GM12878 (cell line): ENCODE measurements at regions of chr10 and their contacts with region 1.

Region 1: GRCh38 chr10:103416436-103417147 is 20.2 kb downstream of the PDCD11 start:
- DNase-seq: peak; percentile 27
- ATAC-seq: peak; percentile 86
- H3K4me3 ChIP-seq: no peak overlapping the region
- H3K27ac ChIP-seq: no peak overlapping the region
- H3K4me1 ChIP-seq: no peaks in the 10 kb centered on the region
- H3K27me3 ChIP-seq: no peaks in the 10 kb centered on the region
- CTCF ChIP-seq: peak; percentile 39 to 80 (median 59); a peak in 5 of 6 replicates
- EP300 ChIP-seq: no peak
- POLR2A ChIP-seq: no peak
- RAD21 ChIP-seq: peak; percentile 79

Region 2: DNA sequence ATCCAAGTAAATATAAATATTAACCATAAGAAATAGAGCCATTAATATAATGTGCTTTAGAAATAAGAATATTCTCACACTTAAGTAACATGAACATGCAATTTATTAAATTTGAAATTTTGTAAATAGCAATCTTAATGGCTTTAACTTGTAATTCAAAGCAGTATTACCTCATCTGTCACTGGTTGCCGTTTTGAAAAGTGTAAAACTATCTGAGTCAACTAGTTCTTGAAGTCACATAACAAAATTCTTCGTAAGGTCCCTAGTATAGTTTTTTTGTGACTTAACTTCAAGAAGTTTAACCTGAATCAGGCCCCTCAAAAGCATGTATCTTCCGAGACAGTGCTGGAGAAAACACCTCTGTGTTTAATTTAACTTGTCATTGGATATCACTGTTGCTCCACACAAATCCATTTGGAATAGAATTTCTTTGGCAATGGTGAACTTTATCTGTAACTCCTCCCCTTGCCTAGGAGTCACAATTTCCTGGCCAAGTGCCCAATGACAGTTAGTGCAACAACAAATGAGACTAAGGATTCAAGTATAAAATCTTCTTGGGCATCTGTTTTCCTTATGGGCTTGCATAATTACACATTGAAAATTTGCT is 270.6 kb before region 1 on chr10:
- CTCF ChIA-PET with region 1: no interaction called
- POLR2A ChIA-PET with region 1: no interaction called
- RAD21 ChIA-PET with region 1: no interaction called
- SMC1A ChIA-PET with region 1: no interaction called
- in situ Hi-C with region 1: no loop called
- intact Hi-C with region 1: no loop called
- DNase-seq: no peak
- ATAC-seq: no peak
- H3K4me3 ChIP-seq: no peak overlapping the region
- H3K27ac ChIP-seq: no peak overlapping the region
- H3K4me1 ChIP-seq: no peaks in the 10 kb centered on the region
- H3K27me3 ChIP-seq: no peaks in the 10 kb centered on the region
- CTCF ChIP-seq: no peak
- EP300 ChIP-seq: no peak
- POLR2A ChIP-seq: no peak
- RAD21 ChIP-seq: no peak

Region 3: DNA sequence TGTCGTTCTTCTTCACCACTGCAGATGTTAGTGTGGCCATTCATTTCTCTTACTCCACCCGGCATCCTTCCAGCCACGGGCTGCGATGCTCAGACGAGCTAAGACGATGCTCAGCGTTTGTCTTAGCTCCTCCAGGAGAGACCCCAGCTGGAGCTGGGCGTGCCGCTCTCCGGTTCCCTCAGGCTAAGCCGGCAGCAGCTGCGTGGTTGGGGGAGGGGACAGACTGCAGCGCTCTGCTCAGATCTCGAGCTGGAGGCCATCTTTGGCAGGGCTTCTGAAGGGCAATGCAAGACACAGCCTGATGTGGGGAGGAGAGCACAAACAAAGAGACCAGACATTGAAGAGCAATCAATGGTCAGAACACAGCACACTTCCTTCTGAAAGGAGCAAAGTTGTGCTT is 134.8 kb before region 1 on chr10:
- CTCF ChIA-PET with region 1: no interaction called
- POLR2A ChIA-PET with region 1: no interaction called
- RAD21 ChIA-PET with region 1: no interaction called
- SMC1A ChIA-PET with region 1: no interaction called
- in situ Hi-C with region 1: no loop called
- intact Hi-C with region 1: no loop called
- DNase-seq: no peak
- ATAC-seq: no peak
- H3K4me3 ChIP-seq: no peak overlapping the region
- H3K27ac ChIP-seq: no peak overlapping the region
- H3K4me1 ChIP-seq: no peaks in the 10 kb centered on the region; the same call in 1 of the 2 replicates
- H3K27me3 ChIP-seq: peaks cover 0 to 6% of the 10 kb centered on the region in 2 experiments
- CTCF ChIP-seq: no peak
- EP300 ChIP-seq: no peak
- POLR2A ChIP-seq: no peak
- RAD21 ChIP-seq: no peak

Region 4: GRCh38 chr10:103427866-103428265 is 11.3 kb after region 1 on chr10:
- CTCF ChIA-PET with region 1: interaction called, 19 read pairs
- POLR2A ChIA-PET with region 1: no interaction called
- RAD21 ChIA-PET with region 1: no interaction called
- SMC1A ChIA-PET with region 1: interaction called, 9 read pairs
- in situ Hi-C with region 1: no loop called
- intact Hi-C with region 1: no loop called
- DNase-seq: no peak
- ATAC-seq: no peak
- H3K4me3 ChIP-seq: no peak overlapping the region
- H3K27ac ChIP-seq: no peak overlapping the region
- H3K4me1 ChIP-seq: no peaks in the 10 kb centered on the region
- H3K27me3 ChIP-seq: no peaks in the 10 kb centered on the region
- CTCF ChIP-seq: no peak
- EP300 ChIP-seq: no peak
- POLR2A ChIP-seq: no peak
- RAD21 ChIP-seq: no peak

Region 5: GRCh38 chr10:103476046-103476995 is 59.7 kb after region 1 on chr10:
- CTCF ChIA-PET with region 1: interaction called, 195 read pairs
- POLR2A ChIA-PET with region 1: interaction called, 6 read pairs
- RAD21 ChIA-PET with region 1: interaction called, 58 read pairs
- SMC1A ChIA-PET with region 1: interaction called, 85 read pairs
- in situ Hi-C with region 1: loop called (anchors 5 kb)
- intact Hi-C with region 1: no loop called
- DNase-seq: no peak
- ATAC-seq: peak; percentile 80
- H3K4me3 ChIP-seq: no peak overlapping the region
- H3K27ac ChIP-seq: no peak overlapping the region
- H3K4me1 ChIP-seq: peaks cover 29% of the 10 kb centered on the region
- H3K27me3 ChIP-seq: no peaks in the 10 kb centered on the region
- CTCF ChIP-seq: peak; percentile 55 to 80 (median 67)
- EP300 ChIP-seq: no peak
- POLR2A ChIP-seq: no peak
- RAD21 ChIP-seq: peak; percentile 66

Region 6: DNA sequence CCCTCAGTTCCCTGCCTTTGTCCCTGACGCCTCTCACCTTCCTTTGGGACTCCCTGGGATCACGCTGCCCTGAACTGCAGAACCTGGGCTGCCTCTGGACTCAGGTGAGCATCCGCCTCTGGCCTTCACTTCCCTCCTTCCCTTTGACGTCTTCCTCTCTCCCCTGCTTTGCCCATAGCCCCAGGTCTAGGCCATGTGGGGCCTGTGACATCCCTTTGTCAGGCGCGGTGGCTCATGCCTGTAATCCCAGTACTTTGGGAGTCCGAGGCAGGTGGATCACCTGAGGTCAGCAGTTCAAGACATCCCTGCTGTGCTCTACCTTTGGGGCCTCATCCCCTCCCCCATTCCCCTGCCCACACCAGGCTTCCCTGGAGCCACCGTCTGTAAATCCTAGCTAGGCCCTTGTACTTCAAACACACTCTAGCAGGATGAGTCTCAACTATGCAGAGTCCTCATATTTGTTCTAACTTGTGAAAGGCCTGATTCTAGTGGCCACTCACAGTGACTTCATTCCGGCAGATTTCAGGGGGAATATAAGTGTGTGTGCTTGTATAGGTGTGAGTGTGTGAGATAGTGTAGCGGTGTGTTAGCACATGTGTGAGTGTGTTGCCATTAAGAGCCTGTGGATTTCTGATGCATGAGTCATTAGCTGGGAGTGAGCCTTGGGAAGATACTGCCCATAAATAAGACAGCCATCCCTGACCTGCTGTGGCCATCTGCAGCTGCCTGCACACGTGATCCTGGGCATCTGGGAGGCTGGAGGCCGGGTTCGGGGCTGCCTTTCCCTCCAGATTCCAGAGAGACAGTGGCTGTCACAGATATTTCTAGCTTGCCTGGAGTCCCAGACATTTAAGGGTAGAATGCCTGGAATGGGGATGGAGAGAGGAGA is 75.1 kb after region 1 on chr10:
- CTCF ChIA-PET with region 1: interaction called, 175 read pairs
- POLR2A ChIA-PET with region 1: interaction called, 4 read pairs
- RAD21 ChIA-PET with region 1: interaction called, 66 read pairs
- SMC1A ChIA-PET with region 1: interaction called, 43 read pairs
- in situ Hi-C with region 1: no loop called
- intact Hi-C with region 1: no loop called
- DNase-seq: no peak
- ATAC-seq: no peak
- H3K4me3 ChIP-seq: no peak overlapping the region
- H3K27ac ChIP-seq: no peak overlapping the region
- H3K4me1 ChIP-seq: peaks cover 10% of the 10 kb centered on the region
- H3K27me3 ChIP-seq: peaks cover 13 to 15% of the 10 kb centered on the region in 2 experiments
- CTCF ChIP-seq: no peak
- EP300 ChIP-seq: no peak
- POLR2A ChIP-seq: no peak
- RAD21 ChIP-seq: no peak

Region 7: DNA sequence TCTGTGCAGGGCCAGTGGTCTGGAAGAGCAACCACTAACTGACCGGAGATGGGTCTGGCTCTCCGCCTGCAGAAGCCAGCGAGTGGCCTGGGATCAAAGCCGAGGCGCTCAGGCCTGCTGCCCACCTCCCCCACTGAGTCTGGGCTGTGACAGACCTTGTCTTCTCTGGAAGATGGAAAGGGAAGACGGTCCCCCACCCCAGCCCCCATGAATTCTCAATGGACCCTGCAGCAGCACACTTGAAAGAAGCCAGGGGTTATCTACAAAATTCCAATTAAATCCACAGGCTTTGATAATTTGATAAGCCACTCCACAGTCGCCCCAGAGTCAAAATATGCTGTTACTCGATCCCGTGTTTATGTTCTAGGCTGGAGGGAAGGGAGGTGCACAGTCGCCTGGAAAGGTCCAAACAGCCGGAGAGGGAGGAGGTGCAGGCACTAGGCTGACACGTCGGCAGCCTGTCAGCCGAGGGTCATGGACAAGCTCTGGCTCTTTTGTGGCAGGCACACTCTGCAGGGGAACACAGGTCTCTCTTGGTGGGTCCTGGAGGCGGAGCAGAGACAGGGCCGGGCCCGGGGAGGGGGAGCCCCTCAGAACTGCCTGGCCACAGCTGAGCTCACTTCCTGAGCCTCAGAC is 303.9 kb after region 1 on chr10:
- CTCF ChIA-PET with region 1: no interaction called
- POLR2A ChIA-PET with region 1: no interaction called
- RAD21 ChIA-PET with region 1: no interaction called
- SMC1A ChIA-PET with region 1: no interaction called
- in situ Hi-C with region 1: no loop called
- intact Hi-C with region 1: no loop called
- DNase-seq: no peak
- ATAC-seq: no peak; the same call in 2 of the 3 replicates
- H3K4me3 ChIP-seq: no peak overlapping the region
- H3K27ac ChIP-seq: no peak overlapping the region
- H3K4me1 ChIP-seq: no peaks in the 10 kb centered on the region
- H3K27me3 ChIP-seq: peaks cover 0 to 5% of the 10 kb centered on the region in 2 experiments; a peak in 2 of 4 replicates
- CTCF ChIP-seq: no peak
- EP300 ChIP-seq: no peak
- POLR2A ChIP-seq: no peak
- RAD21 ChIP-seq: no peak